RWPE1 (cell line): ENCODE measurements at regions of chr6 and their contacts with region 1.

Region 1: DNA sequence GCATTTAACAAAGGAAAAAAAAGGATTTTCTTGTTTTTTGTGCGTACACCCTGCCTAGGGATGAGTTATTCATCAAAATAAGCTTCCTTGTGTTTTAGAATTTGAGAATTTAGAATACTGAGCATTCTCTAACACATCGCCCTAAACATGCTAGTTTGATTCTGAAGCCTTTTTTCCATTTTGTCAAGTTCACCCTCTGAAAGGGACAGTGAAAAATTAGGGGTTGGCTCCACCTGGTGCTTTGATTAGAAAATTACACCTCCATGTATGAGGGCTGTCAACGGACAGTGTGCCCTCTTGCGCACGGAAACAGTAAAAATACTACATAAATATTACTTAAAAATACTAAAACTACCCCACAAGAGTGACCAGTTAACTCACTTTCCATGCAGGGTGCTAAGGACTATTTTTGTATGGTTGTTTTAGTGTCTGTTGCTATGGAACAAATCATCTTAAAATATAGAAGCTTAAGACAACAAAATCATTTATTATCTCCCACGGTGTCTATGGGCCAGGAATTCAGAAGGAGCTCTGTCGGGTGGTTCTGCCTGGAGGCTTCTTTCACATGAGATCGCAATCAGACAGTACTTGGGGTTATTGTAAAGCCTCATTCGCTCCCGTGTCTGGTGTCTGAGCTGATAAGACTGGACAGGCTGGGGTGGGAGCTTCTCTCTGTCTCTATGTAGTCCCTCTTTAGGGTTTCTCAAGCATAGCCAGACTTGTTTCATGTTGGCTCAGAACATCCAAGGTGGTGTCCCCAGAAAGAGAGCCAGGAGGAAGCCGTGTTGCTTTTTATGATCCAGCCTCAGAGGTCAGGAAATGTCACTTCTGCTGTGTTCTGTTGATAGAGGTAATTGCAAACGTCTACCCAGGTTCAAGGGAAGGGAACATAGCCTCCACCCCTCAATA is 41.1 kb upstream of the TMEM170B start:
- DNase-seq: peak; percentile 74
- H3K27ac ChIP-seq: no peak overlapping the region
- CTCF ChIP-seq: peak; percentile 78

Region 2: GRCh38 chr6:11144393-11144851 is 352.0 kb before region 1 on chr6:
- CTCF ChIA-PET with region 1: interaction called, 17 read pairs
- POLR2A ChIA-PET with region 1: no interaction called
- DNase-seq: peak; percentile 76
- H3K27ac ChIP-seq: no peak overlapping the region
- CTCF ChIP-seq: peak; percentile 87

Region 3: DNA sequence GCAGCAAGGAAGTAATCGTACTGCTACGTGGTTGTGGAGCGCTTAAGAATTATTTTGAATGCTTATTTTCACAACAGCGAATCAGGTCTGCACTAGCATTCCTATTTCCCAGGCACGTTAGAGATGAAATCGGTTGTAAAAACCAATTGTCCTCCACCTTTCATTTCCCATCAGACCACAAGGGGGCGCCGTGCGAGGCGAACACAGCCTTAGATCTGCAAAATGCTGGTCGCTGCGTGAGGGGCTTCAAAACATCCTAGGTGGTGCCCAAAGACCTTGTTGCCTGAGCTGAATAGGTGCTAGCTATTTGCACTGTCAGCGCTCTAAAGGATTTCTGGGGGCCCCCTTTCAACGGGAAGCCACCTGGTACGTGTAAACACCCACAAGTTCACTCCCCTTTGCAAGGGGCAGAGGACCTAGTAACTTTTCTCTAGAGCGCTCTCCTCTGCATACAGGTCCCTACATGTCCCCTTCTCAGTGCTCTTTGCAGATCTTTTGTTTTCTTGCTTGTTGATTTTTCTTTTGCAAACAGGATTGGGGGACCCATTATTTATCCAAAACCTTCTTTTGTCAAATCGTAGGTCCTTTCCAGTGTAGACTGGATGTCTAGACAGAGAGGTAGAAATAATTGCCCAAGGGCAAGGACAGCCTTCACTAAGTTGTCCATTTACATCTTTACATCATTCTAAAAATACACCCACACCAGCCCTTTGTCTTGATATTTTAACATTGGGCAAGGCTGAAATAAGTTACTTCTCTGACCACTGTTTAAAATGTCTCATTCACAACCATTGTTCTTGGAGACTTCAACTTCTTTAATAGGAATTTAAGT is 323.7 kb before region 1 on chr6:
- CTCF ChIA-PET with region 1: interaction called, 10 read pairs
- POLR2A ChIA-PET with region 1: no interaction called
- DNase-seq: peak; percentile 21
- H3K27ac ChIP-seq: no peak overlapping the region
- CTCF ChIP-seq: peak; percentile 71

Region 4: DNA sequence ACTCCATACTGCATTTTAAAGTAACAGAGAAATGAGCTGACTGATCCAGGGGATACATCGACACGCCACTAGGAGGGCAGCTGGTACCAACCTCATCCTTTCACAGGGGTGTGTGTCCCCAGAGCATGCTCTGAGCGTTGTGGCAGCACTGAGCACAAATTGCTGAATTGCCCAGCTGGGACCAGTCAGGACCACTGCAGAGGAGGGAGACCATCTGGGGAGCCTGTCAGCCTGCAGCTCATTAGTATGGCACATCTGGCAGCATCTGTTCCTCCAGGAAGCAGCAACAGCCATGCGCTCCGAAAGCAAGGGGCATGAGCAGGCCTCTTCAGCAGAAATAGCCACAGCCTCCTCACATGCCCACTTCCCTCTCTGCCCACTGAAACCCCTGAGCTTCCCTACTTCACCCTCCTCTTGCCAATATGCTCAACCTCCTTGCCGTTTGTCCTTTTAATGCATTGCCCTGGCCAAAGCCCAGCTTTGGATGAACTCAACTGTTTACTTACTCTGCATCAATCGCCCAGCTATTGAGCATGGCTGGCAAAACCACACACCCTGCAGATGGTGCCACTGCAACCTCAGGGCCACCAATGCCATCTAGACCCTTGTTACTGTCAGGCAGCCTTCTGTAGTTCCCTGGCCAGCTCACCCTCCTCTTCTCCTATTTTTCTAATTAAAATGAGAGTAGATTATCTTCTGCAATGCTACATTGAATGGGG is 186.3 kb before region 1 on chr6:
- CTCF ChIA-PET with region 1: no interaction called
- POLR2A ChIA-PET with region 1: no interaction called
- DNase-seq: no peak
- H3K27ac ChIP-seq: no peak overlapping the region
- CTCF ChIP-seq: no peak